Colonic mucosa (tissue), 4 donors: ENCODE measurements at regions of chr17 and their contacts with region 1.

Region 1: GRCh38 chr17:56939901-56940343 is 20.9 kb downstream of the COIL start:
- DNase-seq: no peak
- H3K4me3 ChIP-seq: no peak overlapping the region
- H3K27ac ChIP-seq: no peak overlapping the region
- H3K4me1 ChIP-seq: no peaks in the 10 kb centered on the region
- H3K27me3 ChIP-seq: no peaks in the 10 kb centered on the region
- CTCF ChIP-seq: peak; percentile 65

Region 2: GRCh38 chr17:56819431-56820145 is 120.3 kb before region 1 on chr17:
- intact Hi-C with region 1: loop called (anchors 2 kb)
- DNase-seq: peak; percentile 91
- H3K4me3 ChIP-seq: no peak overlapping the region
- H3K27ac ChIP-seq: no peak overlapping the region
- H3K4me1 ChIP-seq: no peaks in the 10 kb centered on the region
- H3K27me3 ChIP-seq: no peaks in the 10 kb centered on the region
- CTCF ChIP-seq: peak; percentile 86

Region 3: DNA sequence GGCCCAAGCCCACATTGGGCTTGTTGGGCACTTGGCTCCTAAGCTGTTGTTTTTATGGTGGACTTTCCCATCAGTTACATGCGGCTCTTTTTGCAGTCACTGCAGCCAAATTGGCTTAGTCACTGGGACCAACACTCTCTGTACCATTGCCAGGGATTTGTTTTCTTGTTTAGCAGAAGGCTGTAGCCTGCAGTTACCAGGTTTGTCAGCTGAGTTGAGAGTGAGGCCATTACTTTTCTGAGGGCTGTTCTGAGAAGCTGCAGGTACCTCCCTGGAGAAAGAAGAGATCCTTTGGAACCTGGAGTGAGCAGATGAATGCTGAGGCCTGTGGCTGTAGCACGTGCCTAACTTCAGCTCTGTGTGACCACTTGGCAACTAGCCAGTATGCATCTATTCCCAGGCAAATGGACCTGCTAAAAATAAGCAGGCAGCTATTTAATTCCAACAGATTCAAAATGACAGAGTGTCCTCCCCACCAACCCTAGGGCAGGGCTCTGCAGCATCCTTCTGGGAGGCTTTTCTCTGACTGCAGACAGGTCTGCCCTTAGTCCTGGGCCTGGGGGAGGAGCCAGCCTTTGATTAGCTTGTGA is 158.0 kb after region 1 on chr17:
- intact Hi-C with region 1: no loop called
- DNase-seq: no peak
- H3K4me3 ChIP-seq: no peak overlapping the region
- H3K27ac ChIP-seq: peak overlapping the region; percentile 5
- H3K4me1 ChIP-seq: peaks cover 3% of the 10 kb centered on the region
- H3K27me3 ChIP-seq: no peaks in the 10 kb centered on the region
- CTCF ChIP-seq: no peak

Region 4: DNA sequence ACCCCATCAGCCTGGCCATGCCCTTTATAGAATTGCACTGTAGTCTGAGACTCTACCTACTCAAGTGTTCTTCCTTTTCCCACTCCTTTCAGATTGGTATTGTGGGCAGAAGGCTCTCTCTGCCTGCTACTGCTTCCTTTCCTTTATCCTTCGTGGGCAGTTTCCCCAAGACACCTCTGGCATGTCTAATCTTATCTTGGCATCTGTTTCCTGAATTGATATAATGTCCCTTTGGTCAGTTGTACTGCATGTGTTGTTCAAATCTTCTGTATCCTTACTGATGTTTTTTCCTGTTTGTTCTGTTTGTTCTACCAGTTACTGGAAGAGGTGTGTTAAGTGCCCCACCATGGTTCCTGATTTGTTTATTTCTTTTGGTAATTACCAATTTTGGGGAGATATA is 286.9 kb after region 1 on chr17:
- intact Hi-C with region 1: no loop called
- DNase-seq: no peak
- H3K4me3 ChIP-seq: no peak overlapping the region
- H3K27ac ChIP-seq: no peak overlapping the region
- H3K4me1 ChIP-seq: no peaks in the 10 kb centered on the region
- H3K27me3 ChIP-seq: no peaks in the 10 kb centered on the region
- CTCF ChIP-seq: no peak